GM12878 (cell line): ENCODE measurements at regions of chr2 and their contacts with region 1.

Region 1: DNA sequence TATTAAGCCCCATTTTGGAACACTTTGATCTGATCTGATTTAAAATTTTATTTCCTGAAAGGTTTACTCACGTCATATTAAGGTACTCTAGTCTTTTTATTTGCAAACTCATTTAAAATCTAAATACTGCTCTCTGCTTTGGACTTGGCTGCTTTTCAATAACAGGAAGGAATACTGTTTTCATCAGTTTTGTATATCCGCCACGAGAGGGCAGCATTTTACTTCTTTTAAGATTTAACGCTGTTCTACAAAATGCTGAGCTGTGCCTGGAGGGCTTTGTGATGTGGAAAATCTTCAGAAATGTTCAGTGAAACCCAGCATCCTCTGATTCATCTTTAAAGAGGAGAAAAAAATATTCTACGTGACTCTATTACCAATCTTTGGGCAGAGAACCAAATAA is 37.5 kb upstream of the SLC38A11 start:
- DNase-seq: no peak
- ATAC-seq: peak; percentile 87
- H3K4me3 ChIP-seq: no peak overlapping the region
- H3K27ac ChIP-seq: no peak overlapping the region
- H3K4me1 ChIP-seq: no peaks in the 10 kb centered on the region
- H3K27me3 ChIP-seq: no peaks in the 10 kb centered on the region
- CTCF ChIP-seq: peak; percentile 40 to 44 (median 43); a peak in 5 of 6 replicates
- EP300 ChIP-seq: no peak
- POLR2A ChIP-seq: no peak
- RAD21 ChIP-seq: peak; percentile 61

Region 2: DNA sequence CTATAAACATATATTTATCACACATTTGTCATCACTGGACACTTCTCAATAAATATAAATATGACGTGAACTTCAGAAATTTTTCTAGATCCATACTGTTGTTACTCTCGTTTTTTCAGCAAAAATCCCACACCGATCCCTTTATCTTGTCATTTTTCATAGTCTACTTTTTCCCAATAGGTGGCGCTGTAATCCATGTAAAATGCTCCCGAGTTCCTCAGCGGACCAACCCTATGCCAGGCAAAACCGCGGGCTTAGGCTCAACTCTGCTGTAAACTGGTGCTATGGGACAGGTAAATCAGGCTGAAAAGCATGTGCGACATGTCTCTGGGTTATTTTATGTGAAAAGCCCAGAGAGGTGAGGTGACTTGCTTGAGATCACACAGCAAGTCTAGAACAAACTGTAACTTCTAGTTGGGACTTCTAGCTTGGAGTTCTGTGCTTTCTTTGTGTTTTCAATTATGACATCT is 255.2 kb before region 1 on chr2:
- CTCF ChIA-PET with region 1: no interaction called
- POLR2A ChIA-PET with region 1: no interaction called
- RAD21 ChIA-PET with region 1: no interaction called
- SMC1A ChIA-PET with region 1: interaction called, 3 read pairs
- in situ Hi-C with region 1: no loop called
- intact Hi-C with region 1: loop called (anchors 5 kb)
- DNase-seq: no peak
- ATAC-seq: peak; percentile 86
- H3K4me3 ChIP-seq: no peak overlapping the region
- H3K27ac ChIP-seq: no peak overlapping the region
- H3K4me1 ChIP-seq: no peaks in the 10 kb centered on the region
- H3K27me3 ChIP-seq: no peaks in the 10 kb centered on the region; a peak in 1 of 4 replicates
- CTCF ChIP-seq: peak; percentile 57 to 73 (median 60)
- EP300 ChIP-seq: no peak
- POLR2A ChIP-seq: no peak
- RAD21 ChIP-seq: peak; percentile 61

Region 3: GRCh38 chr2:165015052-165015642 is 22.3 kb after region 1 on chr2:
- CTCF ChIA-PET with region 1: interaction called, 18 read pairs
- POLR2A ChIA-PET with region 1: no interaction called
- RAD21 ChIA-PET with region 1: no interaction called
- SMC1A ChIA-PET with region 1: interaction called, 3 read pairs
- in situ Hi-C with region 1: no loop called
- intact Hi-C with region 1: no loop called
- DNase-seq: no peak
- ATAC-seq: peak; percentile 95
- H3K4me3 ChIP-seq: no peak overlapping the region
- H3K27ac ChIP-seq: no peak overlapping the region
- H3K4me1 ChIP-seq: no peaks in the 10 kb centered on the region
- H3K27me3 ChIP-seq: no peaks in the 10 kb centered on the region
- CTCF ChIP-seq: peak; percentile 77 to 85 (median 80)
- EP300 ChIP-seq: no peak
- POLR2A ChIP-seq: no peak
- RAD21 ChIP-seq: peak; percentile 65

Region 4: DNA sequence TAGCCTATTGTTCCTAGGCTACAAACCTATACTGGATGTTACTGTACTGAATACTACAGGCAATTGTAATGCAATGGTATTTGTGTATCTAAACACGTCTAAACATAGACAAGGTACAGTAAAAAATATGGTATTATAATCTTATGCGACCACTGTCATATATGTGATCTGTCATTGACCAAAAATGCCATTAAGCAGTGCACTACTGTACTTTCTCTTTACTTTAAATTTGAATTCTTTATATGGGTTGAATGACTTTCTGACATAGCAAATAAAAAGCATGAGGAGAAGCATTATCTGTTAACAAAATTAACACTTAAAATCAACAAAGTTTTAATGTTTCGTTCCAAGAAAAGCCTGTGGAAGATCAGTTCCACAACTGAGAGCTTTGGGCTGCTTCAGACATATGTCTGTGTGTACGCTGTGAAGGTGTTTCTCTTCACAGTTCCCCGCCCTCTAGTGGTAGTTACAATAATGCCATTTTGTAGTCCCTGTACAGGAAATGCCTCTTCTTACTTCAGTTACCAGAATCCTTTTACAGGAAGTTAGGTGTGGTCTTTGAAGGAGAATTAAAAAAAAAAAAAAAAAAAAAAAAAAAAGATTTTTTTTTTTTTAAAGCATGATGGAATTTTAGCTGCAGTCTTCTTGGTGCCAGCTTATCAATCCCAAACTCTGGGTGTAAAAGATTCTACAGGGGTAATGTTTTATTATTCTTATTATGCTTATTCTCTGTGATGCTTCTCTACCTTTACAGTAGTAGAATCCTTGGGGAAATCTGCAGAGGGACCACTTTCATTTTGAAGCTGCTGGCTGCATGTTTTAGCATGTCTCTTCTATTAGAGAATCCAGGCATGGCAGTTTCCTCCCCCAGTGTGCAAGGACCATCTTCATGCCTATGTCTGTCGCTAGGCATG is 300.9 kb after region 1 on chr2:
- CTCF ChIA-PET with region 1: interaction called, 5 read pairs
- POLR2A ChIA-PET with region 1: no interaction called
- RAD21 ChIA-PET with region 1: no interaction called
- SMC1A ChIA-PET with region 1: no interaction called
- in situ Hi-C with region 1: no loop called
- intact Hi-C with region 1: loop called (anchors 2 kb)
- DNase-seq: peak; percentile 56
- ATAC-seq: peak; percentile 100
- H3K4me3 ChIP-seq: no peak overlapping the region
- H3K27ac ChIP-seq: no peak overlapping the region
- H3K4me1 ChIP-seq: no peaks in the 10 kb centered on the region
- H3K27me3 ChIP-seq: no peaks in the 10 kb centered on the region
- CTCF ChIP-seq: peak; percentile 73 to 80 (median 79)
- EP300 ChIP-seq: no peak
- POLR2A ChIP-seq: no peak
- RAD21 ChIP-seq: peak; percentile 56; the same call in 1 of the 2 replicates

Region 5: DNA sequence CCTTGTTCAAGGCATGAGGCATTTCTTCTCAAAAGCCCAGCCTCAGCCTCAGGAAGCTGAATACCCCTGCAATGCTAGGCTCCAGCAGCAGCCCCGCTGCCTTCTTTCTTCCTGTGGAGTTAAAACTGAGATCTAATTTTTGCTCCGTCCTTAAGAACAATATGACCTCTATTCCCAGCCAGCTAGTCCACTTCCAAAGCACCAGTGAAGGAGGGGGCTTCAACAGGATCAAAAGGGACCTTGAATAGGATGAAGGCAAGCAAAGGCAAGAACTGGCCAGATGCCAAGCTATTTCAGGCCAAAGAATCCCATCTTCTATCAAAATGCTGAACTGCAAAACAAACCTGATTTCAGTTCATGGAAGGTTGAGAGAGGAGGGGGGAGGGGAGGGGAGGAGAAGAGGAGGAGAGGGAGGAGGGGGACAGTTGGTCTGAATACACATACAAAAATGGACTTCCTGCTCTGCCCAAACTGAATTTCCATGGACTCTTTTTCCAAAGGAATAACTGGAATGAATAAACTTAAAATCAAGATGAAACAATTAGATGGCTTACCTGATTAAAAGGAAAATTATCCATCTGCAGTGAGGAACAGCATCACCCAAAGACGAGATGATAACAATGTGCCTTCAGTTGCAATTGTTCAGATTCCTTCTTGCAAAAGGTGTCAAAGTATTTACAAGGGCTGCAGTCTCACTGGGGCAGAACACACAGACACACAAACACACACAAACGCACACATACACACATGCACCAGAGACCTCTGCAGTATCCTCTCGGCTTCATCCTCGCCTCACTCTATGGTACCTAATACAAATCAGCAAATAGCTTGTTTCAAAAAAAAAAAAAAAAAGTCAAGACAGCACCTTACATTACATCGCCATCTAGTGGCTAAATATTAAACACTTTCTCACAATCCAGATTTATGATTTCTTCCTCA is 1134.7 kb after region 1 on chr2 and contains the start of gene SCN1A:
- CTCF ChIA-PET with region 1: interaction called, 4 read pairs
- POLR2A ChIA-PET with region 1: no interaction called
- RAD21 ChIA-PET with region 1: no interaction called
- SMC1A ChIA-PET with region 1: no interaction called
- in situ Hi-C with region 1: no loop called
- intact Hi-C with region 1: loop called (anchors 10 kb)
- DNase-seq: no peak
- ATAC-seq: peak; percentile 48
- H3K4me3 ChIP-seq: no peak within 1 kb of the TSS
- H3K27ac ChIP-seq: no peak within 1 kb of the TSS
- H3K4me1 ChIP-seq: no peaks in the 10 kb centered on the region
- H3K27me3 ChIP-seq: no peaks in the 10 kb centered on the region
- CTCF ChIP-seq: peak; percentile 38 to 64 (median 56); a peak in 5 of 6 replicates
- EP300 ChIP-seq: no peak
- POLR2A ChIP-seq: no peak
- RAD21 ChIP-seq: peak; percentile 64
- polyA plus RNA-seq, gene SCN1A: not detected